Activated T-helper 1 cell treated with anti-CD3 and anti-CD28 coated beads, Interleukin-12 subunit alpha, Interleukin-12 subunit beta, Interleukin-2, Interleukin-4 antibody, amounts not matched to agents 30 ng/mL and 10 ng/mL and 1 ng/mL, durations not matched to agents 14 hours and 24 hours and 36 hours (primary cell): ENCODE measurements at regions of chr3 and their contacts with region 1.

Region 1: GRCh38 chr3:14178247-14179113 is at the starts of genes LSM3 and XPC:
- DNase-seq: peak; percentile 98
- H3K4me3 Mint-ChIP-seq: peak within 1 kb of the TSS; percentile 94
- H3K27ac Mint-ChIP-seq: peak within 1 kb of the TSS; percentile 99
- H3K4me1 Mint-ChIP-seq: peaks cover 64% of the 10 kb centered on the region
- H3K27me3 Mint-ChIP-seq: no peaks in the 10 kb centered on the region
- total RNA-seq, gene LSM3: 15.6 and 15.8 TPM in 2 replicates
- total RNA-seq, gene XPC: 34.1 and 35.9 TPM in 2 replicates

Region 2: DNA sequence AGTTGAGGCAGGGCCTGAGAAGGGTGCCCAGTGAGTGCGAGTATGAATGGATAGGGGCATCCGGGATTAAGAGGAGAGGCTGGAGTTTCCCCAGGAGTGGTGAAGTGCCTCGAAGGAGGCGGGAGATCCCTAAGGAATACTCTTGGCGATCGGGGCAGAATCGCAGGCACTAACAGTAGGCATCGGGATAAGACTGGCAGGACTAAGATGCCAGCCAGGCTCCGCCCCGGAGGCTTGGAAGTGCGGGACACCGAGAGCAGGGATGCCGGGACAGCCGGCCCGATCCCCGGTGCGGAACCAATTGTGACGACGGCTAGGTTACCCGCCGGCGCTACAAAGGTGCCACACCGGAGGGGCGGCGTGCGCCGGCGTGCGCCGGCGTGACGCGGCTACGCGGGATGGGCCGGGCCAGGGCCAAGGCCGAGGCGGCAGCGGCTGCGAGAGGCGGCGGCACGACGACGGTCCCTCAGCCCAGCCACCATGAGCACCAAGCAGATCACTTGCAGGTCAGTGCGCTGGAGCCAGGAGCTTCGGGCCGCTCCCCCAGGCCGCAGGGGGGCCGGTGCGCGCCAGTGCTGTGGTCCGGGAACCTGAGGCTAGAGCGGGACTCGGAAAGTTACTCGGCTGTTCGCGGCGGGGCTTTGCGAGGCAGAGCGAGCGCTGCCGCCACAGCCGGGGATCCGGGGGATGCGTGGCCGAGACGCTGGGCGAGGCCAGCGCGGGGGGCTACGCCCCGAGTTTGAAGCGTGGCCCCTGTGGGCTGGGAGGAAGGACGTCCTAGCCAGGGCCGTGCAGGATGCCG is 1621.6 kb before region 1 on chr3 and contains the start of gene MKRN2:
- intact Hi-C with region 1: loop called (anchors 5 kb)
- DNase-seq: peak; percentile 79
- H3K4me3 Mint-ChIP-seq: peak within 1 kb of the TSS; percentile 91
- H3K27ac Mint-ChIP-seq: peak within 1 kb of the TSS; percentile 88
- H3K4me1 Mint-ChIP-seq: peaks cover 67% of the 10 kb centered on the region
- H3K27me3 Mint-ChIP-seq: peaks cover 27% of the 10 kb centered on the region
- total RNA-seq, gene MKRN2: 28.5 and 28.6 TPM in 2 replicates

Region 3: DNA sequence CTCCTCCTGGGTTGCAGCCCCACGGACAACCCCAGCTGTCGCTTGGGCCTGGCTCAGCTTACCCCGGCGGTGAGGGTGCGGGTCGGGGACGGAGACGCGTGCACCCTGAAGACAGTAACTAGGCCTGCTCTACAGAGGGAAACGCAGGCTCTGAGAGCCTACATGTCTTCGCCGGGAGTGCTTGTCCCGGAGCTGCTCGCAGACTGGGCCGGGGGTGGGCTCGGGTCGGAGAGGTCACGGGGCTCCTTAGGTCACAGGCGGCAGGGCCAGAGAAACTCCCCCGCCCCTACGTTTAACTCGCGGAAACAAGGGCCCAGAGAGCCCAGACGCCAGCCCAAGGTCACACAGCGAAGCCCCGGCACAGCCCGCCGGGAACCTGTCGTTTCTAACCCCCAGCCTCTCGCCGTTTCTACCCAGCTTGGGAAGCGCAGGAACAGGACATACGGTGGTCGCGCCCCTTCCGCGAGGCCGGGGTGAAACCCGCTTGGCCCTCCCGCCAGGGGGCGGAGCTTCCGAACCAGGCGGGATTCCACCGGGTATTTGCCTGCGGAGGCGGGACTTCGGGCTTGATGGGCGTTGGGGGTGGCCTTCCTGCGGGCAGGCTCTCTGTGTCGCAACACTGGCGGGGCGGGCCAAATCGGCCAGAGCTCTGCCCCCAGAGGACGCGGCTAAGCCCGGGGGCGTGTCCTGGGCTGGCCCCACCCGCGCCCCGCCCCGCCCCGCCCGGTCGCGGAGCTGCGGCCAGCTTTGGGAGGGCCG is 698.7 kb before region 1 on chr3 and contains the start of gene HDAC11:
- intact Hi-C with region 1: loop called (anchors 1 kb)
- DNase-seq: peak; percentile 98
- H3K4me3 Mint-ChIP-seq: peak within 1 kb of the TSS; percentile 88
- H3K27ac Mint-ChIP-seq: peak within 1 kb of the TSS; percentile 84
- H3K4me1 Mint-ChIP-seq: peaks cover under 1% of the 10 kb centered on the region
- H3K27me3 Mint-ChIP-seq: peaks cover 7% of the 10 kb centered on the region
- total RNA-seq, gene HDAC11: 1.4 and 2.0 TPM in 2 replicates

Region 4: GRCh38 chr3:14133255-14133701 is 45.2 kb before region 1 on chr3:
- intact Hi-C with region 1: no loop called
- DNase-seq: no peak
- H3K4me3 Mint-ChIP-seq: no peak overlapping the region
- H3K27ac Mint-ChIP-seq: no peak overlapping the region
- H3K4me1 Mint-ChIP-seq: peaks cover 3% of the 10 kb centered on the region
- H3K27me3 Mint-ChIP-seq: no peaks in the 10 kb centered on the region

Region 5: GRCh38 chr3:14144423-14145075 is 33.9 kb before region 1 on chr3:
- intact Hi-C with region 1: loop called (anchors 1 kb)
- DNase-seq: peak; percentile 75
- H3K4me3 Mint-ChIP-seq: peak overlapping the region; percentile 64
- H3K27ac Mint-ChIP-seq: peak overlapping the region; percentile 93
- H3K4me1 Mint-ChIP-seq: peaks cover 59% of the 10 kb centered on the region
- H3K27me3 Mint-ChIP-seq: no peaks in the 10 kb centered on the region

Region 6: GRCh38 chr3:14651440-14652251 is 473.2 kb after region 1 on chr3 and contains the start of gene CCDC174:
- intact Hi-C with region 1: loop called (anchors 1 kb)
- DNase-seq: peak; percentile 94
- H3K4me3 Mint-ChIP-seq: peak within 1 kb of the TSS; percentile 99
- H3K27ac Mint-ChIP-seq: peak within 1 kb of the TSS; percentile 90
- H3K4me1 Mint-ChIP-seq: peaks cover 38% of the 10 kb centered on the region
- H3K27me3 Mint-ChIP-seq: peaks cover 4% of the 10 kb centered on the region
- total RNA-seq, gene CCDC174: 16.6 and 21.7 TPM in 2 replicates

Region 7: DNA sequence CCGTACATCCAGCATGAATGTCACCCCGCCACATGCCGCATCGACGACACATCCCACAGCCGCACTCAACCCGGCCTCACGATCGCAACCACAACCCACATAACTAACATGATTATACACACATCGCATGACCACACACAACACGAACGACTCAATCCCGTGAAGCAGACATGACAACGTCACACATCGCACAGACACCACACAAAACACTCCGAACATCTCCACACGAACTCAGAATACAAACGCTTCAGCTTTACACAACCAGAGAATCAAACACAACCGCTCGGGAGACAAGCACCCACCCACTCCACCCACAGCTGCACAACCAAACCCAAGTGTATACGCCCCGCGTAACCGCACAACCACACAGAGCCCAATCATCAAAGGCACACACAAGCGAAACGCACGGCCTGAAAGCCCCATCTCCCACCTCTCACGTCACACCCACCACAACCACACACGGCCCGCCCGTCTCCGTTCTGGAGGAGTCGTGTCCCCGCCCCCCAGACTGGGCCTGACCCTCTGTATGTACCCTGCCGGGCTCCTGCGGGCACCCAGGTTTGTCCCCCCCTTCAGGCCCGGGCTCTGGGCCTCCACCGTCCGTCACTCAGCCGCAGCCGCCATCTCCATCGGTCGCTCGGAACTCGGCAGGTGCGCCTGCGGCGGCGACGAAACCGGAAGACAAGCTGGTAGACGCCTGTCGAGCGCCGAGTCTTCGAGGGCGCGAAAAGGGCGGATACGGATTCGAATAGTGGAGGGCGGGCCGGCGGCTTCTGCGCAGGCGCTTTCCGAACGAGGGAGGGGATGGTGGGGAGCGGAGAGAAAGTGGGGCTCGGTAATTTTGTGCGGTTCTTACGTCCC is 920.3 kb after region 1 on chr3 and contains the start of gene RBSN:
- intact Hi-C with region 1: loop called (anchors 1 kb)
- DNase-seq: peak; percentile 95
- H3K4me3 Mint-ChIP-seq: peak within 1 kb of the TSS; percentile 92
- H3K27ac Mint-ChIP-seq: peak within 1 kb of the TSS; percentile 98
- H3K4me1 Mint-ChIP-seq: peaks cover 22% of the 10 kb centered on the region
- H3K27me3 Mint-ChIP-seq: peaks cover 2% of the 10 kb centered on the region
- total RNA-seq, gene RBSN: 11.7 and 12.5 TPM in 2 replicates